CD4-positive, alpha-beta memory T cell (primary cell): ENCODE measurements at regions of chr11 and their contacts with region 1.

Region 1: DNA sequence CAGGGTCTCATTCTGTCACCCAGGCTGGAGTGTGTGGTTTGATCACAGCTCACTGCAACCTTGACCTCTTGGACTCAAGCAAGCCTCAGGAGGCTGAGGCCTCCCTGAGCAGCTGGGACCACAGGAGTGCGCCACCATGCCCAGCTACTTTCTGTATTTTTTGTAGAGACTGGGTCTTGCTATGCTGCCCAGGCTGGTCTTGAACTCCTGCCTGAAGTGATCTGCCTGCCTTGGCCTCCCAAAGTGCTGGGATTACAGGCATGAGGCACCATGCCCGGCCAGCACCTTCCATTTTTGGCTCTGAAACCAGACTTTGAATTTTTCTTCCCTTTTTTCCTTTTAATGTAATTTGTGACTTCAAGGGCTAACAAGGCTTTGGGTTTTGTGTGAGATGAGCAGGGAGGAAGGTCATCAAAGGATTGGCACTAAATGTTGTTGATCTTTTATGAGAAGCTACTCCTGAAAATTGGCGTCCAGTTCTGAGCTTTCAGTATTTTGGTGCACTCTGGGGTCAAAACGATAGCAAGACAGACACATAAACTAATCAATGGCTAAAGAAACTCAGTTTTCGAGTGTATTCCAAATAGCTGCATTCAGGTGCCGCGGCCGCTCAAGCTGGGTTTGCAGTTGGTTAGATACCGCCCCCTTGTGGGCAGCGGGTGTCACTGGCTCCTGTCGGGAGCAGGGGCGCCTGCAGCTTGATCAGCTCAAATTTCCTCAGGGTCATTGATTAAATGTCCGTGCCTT is 51.9 kb upstream of the CLMP start:
- DNase-seq: peak; percentile 70 to 78 (median 77)
- H3K4me3 ChIP-seq: no peak overlapping the region
- H3K4me3 Mint-ChIP-seq: peak overlapping the region in 5 of 8 donors; percentile 27 to 60 (median 36)
- H3K27ac ChIP-seq: no peak overlapping the region
- H3K27ac Mint-ChIP-seq: no peak overlapping the region
- H3K4me1 ChIP-seq: no peaks in the 10 kb centered on the region
- H3K4me1 Mint-ChIP-seq: peaks cover 3 to 7% (median 4%) of the 10 kb centered on the region in 4 donors
- H3K27me3 ChIP-seq: no peaks in the 10 kb centered on the region
- H3K27me3 Mint-ChIP-seq: peaks cover 13 to 16% of the 10 kb centered on the region in 2 donors

Region 2: DNA sequence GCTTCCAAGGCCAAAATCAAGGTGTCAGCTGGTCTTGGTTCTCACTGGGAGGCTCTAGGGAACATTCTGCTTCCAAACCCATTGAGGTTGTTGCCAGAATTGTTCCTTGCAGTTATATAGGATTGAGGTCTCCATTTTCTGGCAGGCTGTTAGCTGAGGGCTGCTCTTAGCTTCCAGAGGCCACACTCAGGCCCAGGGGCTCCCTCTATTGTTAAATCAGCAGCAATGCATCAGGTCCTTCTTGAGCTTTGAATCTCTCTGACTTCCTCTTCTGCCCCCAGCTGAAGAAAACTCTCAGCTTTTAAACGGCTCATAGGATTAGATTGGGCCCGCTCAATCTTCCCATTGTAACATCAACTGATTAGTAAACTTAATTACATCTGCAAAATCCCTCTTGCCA is 226.0 kb before region 1 on chr11:
- CTCF ChIA-PET with region 1: interaction called, 11 read pairs
- POLR2A ChIA-PET with region 1: no interaction called
- intact Hi-C with region 1: no loop called
- DNase-seq: peak in 4 of 5 donors; percentile 21 to 34 (median 26)
- H3K4me3 ChIP-seq: no peak overlapping the region
- H3K4me3 Mint-ChIP-seq: no peak overlapping the region
- H3K27ac ChIP-seq: no peak overlapping the region
- H3K27ac Mint-ChIP-seq: no peak overlapping the region
- H3K4me1 ChIP-seq: peaks cover 8% of the 10 kb centered on the region
- H3K4me1 Mint-ChIP-seq: peaks cover 5 to 8% (median 8%) of the 10 kb centered on the region in 4 donors
- H3K27me3 ChIP-seq: no peaks in the 10 kb centered on the region
- H3K27me3 Mint-ChIP-seq: peaks cover 3 to 4% of the 10 kb centered on the region in 2 donors

Region 3: GRCh38 chr11:123054301-123055065 is 192.4 kb before region 1 on chr11:
- CTCF ChIA-PET with region 1: interaction called, 29 read pairs
- POLR2A ChIA-PET with region 1: interaction called, 4 read pairs
- intact Hi-C with region 1: loop called (anchors 1 kb)
- DNase-seq: peak; percentile 65 to 72 (median 69)
- H3K4me3 ChIP-seq: no peak overlapping the region
- H3K4me3 Mint-ChIP-seq: peak overlapping the region in 6 of 8 donors; percentile 52 to 100 (median 86)
- H3K27ac ChIP-seq: no peak overlapping the region
- H3K27ac Mint-ChIP-seq: peak overlapping the region; percentile 61 to 97 (median 87)
- H3K4me1 ChIP-seq: peaks cover 56% of the 10 kb centered on the region
- H3K4me1 Mint-ChIP-seq: peaks cover 46 to 62% (median 51%) of the 10 kb centered on the region in 4 donors
- H3K27me3 ChIP-seq: no peaks in the 10 kb centered on the region
- H3K27me3 Mint-ChIP-seq: no peaks in the 10 kb centered on the region

Region 4: DNA sequence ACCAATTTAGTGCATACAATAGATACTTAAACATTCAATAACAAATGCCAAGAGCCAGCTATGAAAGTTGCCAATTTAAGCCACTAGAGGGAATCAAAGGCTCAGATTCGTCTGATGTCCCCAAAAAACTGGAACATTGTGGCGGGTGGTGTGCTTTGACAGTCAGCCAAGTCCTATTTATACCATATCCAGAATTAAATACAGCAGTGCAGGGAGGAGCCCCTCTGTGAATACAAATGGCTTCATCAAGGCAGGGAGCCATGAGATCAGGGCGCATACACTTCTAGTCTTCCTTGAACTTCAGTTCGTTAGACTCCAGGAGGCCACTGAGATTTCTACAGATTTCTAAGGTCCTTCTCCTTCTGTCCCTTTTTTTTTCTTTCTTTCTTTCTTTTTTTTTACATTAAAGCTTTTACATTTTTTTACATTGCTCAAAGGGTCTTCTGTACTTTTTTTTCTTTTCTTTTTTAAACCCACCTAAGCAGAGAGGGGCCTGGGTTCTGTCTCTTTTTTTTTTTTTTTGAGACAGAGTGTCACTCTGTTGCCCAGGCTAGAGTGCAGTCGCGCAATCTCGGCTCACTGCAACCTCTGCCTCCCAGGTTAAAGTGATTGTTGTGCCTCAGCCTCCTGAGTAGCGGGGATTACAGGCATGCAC is 143.5 kb before region 1 on chr11:
- CTCF ChIA-PET with region 1: interaction called, 253 read pairs
- POLR2A ChIA-PET with region 1: interaction called, 4 read pairs
- intact Hi-C with region 1: loop called (anchors 1 kb)
- DNase-seq: peak in 4 of 5 donors; percentile 50 to 55 (median 52)
- H3K4me3 ChIP-seq: no peak overlapping the region
- H3K4me3 Mint-ChIP-seq: no peak overlapping the region
- H3K27ac ChIP-seq: no peak overlapping the region
- H3K27ac Mint-ChIP-seq: peak overlapping the region in 3 of 7 donors; percentile 1 to 85 (median 59)
- H3K4me1 ChIP-seq: peaks cover 16% of the 10 kb centered on the region
- H3K4me1 Mint-ChIP-seq: peaks cover 17 to 37% (median 26%) of the 10 kb centered on the region in 4 donors
- H3K27me3 ChIP-seq: no peaks in the 10 kb centered on the region
- H3K27me3 Mint-ChIP-seq: no peaks in the 10 kb centered on the region

Region 5: DNA sequence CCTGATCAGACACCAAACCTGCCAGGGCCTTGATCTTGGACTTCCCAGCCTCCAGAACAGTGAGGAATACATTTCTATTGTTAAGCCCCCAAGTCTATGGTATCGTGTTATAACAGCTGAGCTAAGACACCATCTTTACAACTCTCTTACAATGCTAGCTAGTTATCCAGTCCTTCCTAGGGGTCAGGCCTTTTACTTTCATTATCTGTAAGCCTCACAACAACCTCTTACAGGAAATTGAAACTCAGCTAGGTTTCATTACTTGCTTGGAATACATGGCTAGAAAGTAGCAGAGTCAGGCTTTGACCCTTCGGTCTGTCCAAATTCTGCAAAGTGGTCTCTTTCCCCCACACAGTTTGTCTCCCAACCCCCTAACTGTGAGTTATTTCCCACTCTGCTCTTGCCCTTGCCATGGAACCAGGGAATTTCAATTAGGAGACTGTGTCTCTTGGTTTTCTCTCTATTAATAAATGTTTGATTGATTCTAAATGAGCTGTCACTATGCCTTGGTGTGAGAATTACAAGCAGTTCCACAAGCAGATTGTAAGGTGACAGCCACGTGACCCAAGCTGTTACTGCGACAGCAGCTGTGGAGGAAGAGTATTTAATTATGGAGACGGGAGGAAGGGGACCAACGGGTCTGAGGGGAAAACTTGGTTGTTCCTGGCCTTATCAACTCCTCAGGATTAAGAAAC is 13.5 kb before region 1 on chr11:
- CTCF ChIA-PET with region 1: interaction called, 22 read pairs
- POLR2A ChIA-PET with region 1: no interaction called
- intact Hi-C with region 1: no loop called
- DNase-seq: peak in 4 of 5 donors; percentile 14 to 24 (median 18)
- H3K4me3 ChIP-seq: peak overlapping the region in 1 of 2 donors; percentile 17
- H3K4me3 Mint-ChIP-seq: peak overlapping the region; percentile 51 to 78 (median 69)
- H3K27ac ChIP-seq: no peak overlapping the region
- H3K27ac Mint-ChIP-seq: peak overlapping the region; percentile 6 to 92 (median 74)
- H3K4me1 ChIP-seq: peaks cover 14% of the 10 kb centered on the region
- H3K4me1 Mint-ChIP-seq: peaks cover 17 to 23% (median 21%) of the 10 kb centered on the region in 4 donors
- H3K27me3 ChIP-seq: no peaks in the 10 kb centered on the region
- H3K27me3 Mint-ChIP-seq: peaks cover 1 to 3% of the 10 kb centered on the region in 2 donors